ENCODE measurements at regions of chr1 and their contacts with region 1.

Region 1: GRCh38 chr1:109397538-109398342 is at the start of gene SORT1:
- DNase-seq: peak; percentile 93

Region 2: GRCh38 chr1:109239580-109240095 is 158.1 kb before region 1 on chr1:
- CTCF ChIA-PET with region 1: interaction called, 19 read pairs
- POLR2A ChIA-PET with region 1: interaction called, 3 read pairs
- DNase-seq: peak; percentile 78

Region 3: DNA sequence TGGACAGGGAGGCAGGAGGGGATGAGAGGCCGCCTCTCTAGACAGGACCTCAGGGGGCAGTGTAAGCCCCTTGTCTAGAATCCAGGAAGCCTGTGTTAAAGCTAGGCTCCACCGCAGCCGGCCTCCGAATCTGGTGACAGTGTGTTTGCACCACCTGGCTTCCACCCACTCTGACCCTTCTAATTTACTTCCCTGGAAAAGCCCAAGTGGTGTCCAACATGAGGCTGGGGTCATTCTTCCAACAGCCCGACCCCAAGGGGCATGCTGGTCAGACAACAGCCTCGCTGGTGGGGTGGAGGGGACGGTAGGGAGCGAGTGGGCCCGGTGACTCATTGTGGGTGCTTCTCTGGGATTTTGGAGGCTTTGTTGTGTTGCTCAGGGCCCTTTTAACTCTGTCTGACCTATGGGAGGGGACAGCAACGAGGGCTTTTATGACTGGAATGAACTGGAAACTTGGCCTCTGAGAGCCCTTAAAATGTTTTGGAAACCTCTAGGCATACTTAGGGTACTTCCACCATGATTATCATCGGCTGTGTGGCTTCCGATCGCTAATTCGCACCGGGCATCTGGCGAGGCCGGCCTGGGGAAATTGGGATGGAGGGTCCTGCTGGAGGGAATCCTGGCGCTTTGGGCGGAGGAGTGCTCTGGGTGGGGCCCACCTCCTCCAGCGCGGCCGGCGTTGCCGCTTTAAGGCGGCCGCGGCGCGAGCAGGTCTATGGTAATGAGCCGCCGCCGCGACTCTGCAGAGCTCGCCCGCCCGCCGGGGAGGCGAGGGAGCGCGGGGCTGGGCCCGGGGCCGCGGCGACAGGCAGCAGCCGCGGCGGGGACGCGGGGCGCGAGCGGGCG is 148.7 kb before region 1 on chr1 and contains the start of gene CELSR2:
- CTCF ChIA-PET with region 1: interaction called, 10 read pairs
- POLR2A ChIA-PET with region 1: interaction called, 8 read pairs
- DNase-seq: peak; percentile 96

Region 4: DNA sequence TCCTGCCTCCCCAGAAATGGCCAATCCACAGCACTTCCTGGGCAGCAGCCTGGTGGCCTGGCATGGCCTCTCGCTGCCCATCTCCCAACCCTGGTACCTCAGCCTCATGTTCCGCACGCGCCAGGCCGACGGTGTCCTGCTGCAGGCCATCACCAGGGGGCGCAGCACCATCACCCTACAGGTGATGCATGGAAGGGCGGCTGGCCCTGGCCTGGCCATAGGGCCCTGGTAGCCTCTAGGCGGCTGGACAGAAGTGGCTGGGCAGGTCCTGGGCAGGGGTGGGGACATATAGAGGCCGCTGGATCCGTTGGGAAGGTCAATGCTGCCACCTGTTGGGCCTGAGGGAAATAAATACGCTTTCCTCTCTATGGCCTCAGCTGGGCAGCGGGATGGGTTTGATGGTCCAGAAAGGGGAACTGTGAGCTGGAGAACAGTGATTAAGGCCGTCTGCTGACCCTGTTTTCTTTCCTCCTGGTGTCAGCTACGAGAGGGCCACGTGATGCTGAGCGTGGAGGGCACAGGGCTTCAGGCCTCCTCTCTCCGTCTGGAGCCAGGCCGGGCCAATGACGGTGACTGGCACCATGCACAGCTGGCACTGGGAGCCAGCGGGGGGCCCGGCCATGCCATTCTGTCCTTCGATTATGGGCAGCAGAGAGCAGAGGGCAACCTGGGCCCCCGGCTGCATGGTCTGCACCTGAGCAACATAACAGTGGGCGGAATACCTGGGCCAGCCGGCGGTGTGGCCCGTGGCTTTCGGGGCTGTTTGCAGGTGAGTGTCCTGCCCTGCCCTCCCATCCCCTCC is 133.9 kb before region 1 on chr1:
- CTCF ChIA-PET with region 1: interaction called, 12 read pairs
- POLR2A ChIA-PET with region 1: interaction called, 4 read pairs
- DNase-seq: peak; percentile 88

Region 5: GRCh38 chr1:109277434-109278204 is 120.1 kb before region 1 on chr1:
- CTCF ChIA-PET with region 1: interaction called, 47 read pairs
- POLR2A ChIA-PET with region 1: interaction called, 28 read pairs
- DNase-seq: peak; percentile 90

Region 6: GRCh38 chr1:109282952-109283747 is 114.6 kb before region 1 on chr1 and contains the start of gene PSRC1:
- CTCF ChIA-PET with region 1: interaction called, 47 read pairs
- POLR2A ChIA-PET with region 1: interaction called, 28 read pairs
- DNase-seq: peak; percentile 99

Region 7: DNA sequence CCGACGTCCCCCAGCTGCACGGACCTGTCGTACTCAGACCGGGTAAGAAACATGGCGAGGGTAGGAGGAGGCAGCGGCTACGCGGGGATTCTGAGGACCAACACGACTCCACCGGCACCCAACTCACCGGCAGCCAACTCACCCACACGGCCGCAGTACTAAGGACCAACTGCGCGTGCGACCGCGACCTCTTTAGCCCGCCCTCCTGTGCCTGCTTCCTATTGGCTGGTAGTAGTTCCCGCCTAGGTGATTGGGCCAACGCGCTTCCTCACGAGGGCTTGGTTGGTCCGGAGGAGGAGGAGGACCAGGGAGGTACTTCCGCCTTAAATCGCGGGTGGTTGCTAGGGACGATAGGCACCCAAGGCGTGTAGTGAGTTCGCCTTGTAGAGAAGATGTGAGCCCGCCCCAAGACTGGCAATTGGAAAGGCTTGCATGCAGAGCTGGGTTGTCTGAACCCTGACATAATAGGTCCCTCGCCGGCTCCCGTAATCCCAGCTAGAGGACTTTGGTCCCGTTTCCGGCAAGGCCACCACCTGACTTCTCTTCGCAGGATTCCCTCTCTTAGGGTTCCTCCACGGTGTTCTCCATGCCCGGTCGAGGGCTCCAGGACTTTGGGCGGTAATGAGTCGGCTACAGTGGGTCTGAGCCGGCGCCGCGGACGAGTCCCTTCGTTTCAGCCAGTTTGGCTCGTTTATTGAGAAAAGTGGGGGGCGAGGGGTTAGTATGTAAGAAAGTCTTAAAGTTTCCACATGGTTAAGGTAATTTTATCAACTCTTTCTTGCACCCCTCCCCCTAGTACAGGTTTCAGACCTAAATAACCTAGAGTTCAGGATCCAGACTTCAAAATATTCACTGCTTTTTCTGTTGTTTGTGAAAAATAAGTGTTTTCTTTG is 28.8 kb after region 1 on chr1 and contains the start of gene PSMA5:
- CTCF ChIA-PET with region 1: interaction called, 4 read pairs
- POLR2A ChIA-PET with region 1: interaction called, 17 read pairs
- DNase-seq: peak; percentile 98

Region 8: GRCh38 chr1:109438798-109439297 is 41.1 kb after region 1 on chr1:
- CTCF ChIA-PET with region 1: no interaction called
- POLR2A ChIA-PET with region 1: no interaction called
- DNase-seq: no peak

Measured in HEK293T (cell line).